ENCODE measurements at regions of chr19 and their contacts with region 1.

Region 1: GRCh38 chr19:7340959-7341837 is 7.5 kb upstream of the ARHGEF18 start:
- DNase-seq: peak; percentile 76 to 94 (median 92)
- H3K4me3 ChIP-seq: no peak overlapping the region
- H3K27ac ChIP-seq: peak overlapping the region in 1 of 2 donors; percentile 58
- H3K4me1 ChIP-seq: peaks cover 3% of the 10 kb centered on the region
- H3K27me3 ChIP-seq: no peaks in the 10 kb centered on the region
- CTCF ChIP-seq: peak; percentile 90 to 97 (median 95)
- EP300 ChIP-seq: no peak
- POLR2A ChIP-seq: no peak

Region 2: GRCh38 chr19:7104747-7105447 is 236.3 kb before region 1 on chr19:
- intact Hi-C with region 1: loop called in 3 of 4 experiments (anchors 2 to 5 kb)
- DNase-seq: no peak
- H3K4me3 ChIP-seq: no peak overlapping the region
- H3K27ac ChIP-seq: no peak overlapping the region
- H3K4me1 ChIP-seq: no peaks in the 10 kb centered on the region
- H3K27me3 ChIP-seq: no peaks in the 10 kb centered on the region
- CTCF ChIP-seq: no peak
- EP300 ChIP-seq: no peak
- POLR2A ChIP-seq: no peak

Region 3: DNA sequence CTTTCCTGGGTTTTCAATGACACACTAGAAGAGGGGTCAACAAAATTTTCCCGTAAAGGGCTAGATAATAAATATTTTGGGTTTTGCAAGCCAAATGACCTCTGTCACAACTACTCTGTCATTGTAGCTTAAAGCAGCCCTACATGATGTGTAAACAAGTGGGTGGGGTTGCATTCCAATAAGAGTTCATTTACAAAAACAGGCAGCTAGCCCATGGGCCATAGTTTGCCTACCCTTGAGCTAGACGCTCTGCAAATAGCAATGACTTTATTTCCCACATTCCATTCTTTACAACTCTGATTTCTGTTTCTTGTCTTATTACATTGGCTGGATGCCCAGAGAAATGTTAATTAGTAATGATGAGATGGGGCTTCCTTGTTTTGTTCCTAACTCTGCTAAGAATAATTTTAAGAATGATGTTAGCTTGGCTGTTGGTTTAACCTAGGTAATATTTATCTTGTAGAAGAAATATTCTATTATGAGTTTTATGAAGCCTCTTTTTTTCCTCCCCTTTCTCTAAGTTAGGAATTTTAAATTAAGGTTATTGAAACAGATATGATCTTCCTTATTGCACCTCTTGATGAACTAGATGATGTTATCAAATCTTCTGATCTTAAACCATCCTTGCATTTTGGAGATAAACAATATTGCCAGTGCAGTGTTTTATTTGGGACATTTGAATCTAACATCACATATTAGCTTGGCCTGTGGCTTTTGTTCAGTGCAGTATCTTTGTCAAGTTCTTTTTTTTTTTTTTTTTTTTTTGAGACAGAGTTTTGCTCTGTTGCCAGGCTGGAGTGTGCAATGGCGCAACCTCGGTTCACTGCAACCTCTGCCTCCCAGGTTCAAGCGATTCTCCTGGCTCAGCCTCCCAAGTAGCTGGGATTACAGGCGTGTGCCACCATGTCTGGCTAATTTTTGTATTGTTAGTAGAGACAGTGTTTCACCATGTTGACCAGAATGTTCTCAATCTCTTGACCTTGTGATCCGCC is 195.4 kb before region 1 on chr19:
- intact Hi-C with region 1: loop called in 3 of 4 experiments (anchors 2 to 10 kb)
- DNase-seq: peak in 1 of 5 donors; percentile 1
- H3K4me3 ChIP-seq: no peak overlapping the region
- H3K27ac ChIP-seq: no peak overlapping the region
- H3K4me1 ChIP-seq: no peaks in the 10 kb centered on the region
- H3K27me3 ChIP-seq: no peaks in the 10 kb centered on the region
- CTCF ChIP-seq: no peak
- EP300 ChIP-seq: no peak
- POLR2A ChIP-seq: no peak

Region 4: DNA sequence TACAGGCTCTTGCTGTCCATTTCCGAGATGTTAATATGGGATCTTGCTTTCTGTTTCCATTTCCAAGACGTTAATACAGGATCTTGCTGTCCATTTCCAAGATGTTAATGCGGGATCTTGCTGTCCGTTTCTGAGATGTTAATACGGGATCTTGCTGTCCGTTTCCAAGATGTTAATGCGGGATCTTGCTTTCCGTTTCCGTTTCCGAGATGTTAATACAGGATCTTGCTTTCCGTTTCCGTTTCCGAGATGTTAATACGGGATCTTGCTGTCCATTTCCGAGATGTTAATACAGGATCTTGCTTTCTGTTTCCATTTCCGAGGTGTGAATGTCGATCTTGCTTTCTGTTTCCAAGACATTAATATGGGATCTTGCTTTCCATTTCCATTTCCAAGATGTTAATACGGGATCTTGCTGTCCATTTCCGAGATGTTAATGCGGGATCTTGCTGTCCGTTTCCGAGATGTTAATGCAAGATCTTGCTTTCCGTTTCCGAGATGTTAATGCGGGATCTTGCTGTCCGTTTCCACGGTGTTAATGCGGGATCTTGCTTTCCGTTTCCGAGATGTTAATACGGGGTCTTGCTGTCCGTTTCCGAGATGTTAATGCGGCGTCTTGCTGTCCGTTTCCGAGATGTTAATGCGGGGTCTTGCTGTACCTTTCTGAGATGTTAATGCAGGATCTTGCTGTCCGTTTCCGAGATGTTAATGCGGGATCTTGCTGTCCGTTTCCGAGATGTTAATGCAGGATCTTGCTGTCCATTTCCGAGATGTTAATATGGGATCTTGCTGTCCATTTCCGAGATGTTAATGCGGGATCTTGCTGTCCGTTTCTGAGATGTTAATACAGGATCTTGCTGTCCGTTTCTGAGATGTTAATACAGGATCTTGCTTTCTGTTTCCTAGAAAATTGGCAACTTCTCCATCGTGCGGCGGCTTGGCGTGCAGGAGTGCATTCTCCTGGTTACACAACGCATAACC is 109.3 kb after region 1 on chr19:
- intact Hi-C with region 1: no loop called
- DNase-seq: no peak
- H3K4me3 ChIP-seq: no peak overlapping the region
- H3K27ac ChIP-seq: no peak overlapping the region
- H3K4me1 ChIP-seq: no peaks in the 10 kb centered on the region
- H3K27me3 ChIP-seq: no peaks in the 10 kb centered on the region
- CTCF ChIP-seq: no peak
- EP300 ChIP-seq: no peak
- POLR2A ChIP-seq: no peak